ENCODE measurements at regions of chr14 and their contacts with region 1.

Region 1: DNA sequence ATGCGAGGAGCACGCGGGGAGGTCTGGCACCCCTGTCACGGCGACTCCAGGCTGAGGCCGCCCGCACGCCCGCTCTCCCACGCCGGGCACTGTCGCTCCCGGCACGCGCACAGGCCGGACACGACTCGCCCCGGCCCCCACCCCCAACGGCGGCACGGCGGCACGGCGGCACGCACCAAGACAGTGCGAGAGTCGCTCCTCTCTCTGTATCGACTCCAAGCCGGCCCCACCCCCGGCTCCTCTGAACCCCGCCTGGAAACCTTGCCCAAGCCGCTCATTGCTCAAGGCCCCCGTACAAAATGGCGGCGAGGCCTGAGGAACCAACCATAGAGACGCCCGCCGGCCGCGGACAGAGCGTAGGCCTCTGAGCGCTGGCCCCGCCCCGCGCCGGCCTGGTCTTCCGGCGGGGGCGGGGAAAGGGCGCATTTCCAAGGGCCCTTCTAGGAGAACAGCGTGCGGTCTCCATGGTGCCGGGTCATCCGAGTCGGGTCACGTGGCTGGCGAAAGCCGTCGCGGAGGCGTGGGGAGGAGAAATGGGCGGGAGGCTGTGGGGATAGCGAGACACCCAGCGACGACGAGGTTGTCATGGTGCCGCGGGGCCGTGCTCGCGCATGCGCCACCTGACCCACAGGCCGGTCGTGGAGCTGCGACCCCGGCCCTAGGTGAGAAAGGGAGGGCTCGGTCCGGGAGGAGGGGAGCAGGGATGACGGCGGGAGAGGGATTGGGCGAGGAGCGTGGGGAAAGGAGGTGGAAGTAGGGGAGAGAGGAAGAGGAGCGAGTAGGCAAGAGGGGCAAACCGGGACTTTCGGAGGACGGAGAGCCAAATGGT is at the start of gene CIPC:
- DNase-seq: peak; percentile 100
- ATAC-seq: peak; percentile 91
- H3K4me3 Mint-ChIP-seq: peak within 1 kb of the TSS; percentile 87
- H3K27ac Mint-ChIP-seq: peak within 1 kb of the TSS; percentile 99
- H3K4me1 Mint-ChIP-seq: peaks cover 40% of the 10 kb centered on the region
- H3K27me3 Mint-ChIP-seq: no peaks in the 10 kb centered on the region
- total RNA-seq, gene CIPC: 8.6 to 10.0 TPM

Region 2: GRCh38 chr14:76710056-76711010 is 387.6 kb before region 1 on chr14:
- CTCF ChIA-PET with region 1: interaction called, 11 read pairs
- POLR2A ChIA-PET with region 1: no interaction called
- intact Hi-C with region 1: loop called in 1 of 2 experiments (anchors 1 kb)
- DNase-seq: peak; percentile 51
- ATAC-seq: peak; percentile 49
- H3K4me3 Mint-ChIP-seq: no peak overlapping the region
- H3K27ac Mint-ChIP-seq: no peak overlapping the region
- H3K4me1 Mint-ChIP-seq: no peaks in the 10 kb centered on the region
- H3K27me3 Mint-ChIP-seq: peaks cover 7% of the 10 kb centered on the region

Region 3: DNA sequence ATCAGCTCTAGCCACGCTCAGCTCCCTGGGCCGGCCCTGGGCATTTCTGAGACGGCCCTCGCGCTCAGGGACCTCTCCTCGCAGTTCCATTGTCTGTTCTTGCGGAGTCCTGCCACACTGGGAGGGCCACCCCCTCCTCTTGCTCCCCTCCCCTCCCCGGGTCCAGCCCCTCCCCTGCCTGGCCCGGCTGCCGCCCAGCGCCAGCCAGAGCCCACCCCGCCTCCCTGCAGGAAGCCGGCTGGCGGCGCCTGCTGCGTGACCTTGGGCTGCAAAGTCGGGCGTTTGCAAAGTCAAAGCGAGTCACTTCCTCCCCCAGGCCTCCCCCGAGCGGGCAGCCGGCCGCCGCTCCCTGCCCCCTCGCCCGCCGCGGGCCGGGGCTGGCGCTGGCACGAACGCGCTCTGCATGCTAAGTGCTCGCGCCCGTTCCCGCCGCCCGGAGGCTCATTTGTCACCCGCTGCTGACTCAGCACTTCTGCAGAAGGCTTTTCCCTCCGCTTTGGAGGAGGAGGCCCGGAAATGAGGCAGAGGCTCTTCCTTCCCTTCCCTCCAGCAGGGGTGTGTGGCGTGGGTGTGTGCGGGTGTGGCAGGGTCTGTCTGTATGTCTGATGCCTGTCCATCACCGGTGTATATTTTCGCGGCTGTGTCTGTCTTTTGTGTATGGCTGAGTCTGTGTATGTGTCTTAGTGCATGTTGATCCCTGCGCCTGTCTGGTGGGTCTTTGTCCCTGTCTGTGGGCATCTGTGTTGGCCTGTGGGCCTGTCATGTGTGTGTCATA is 141.4 kb before region 1 on chr14:
- CTCF ChIA-PET with region 1: no interaction called
- POLR2A ChIA-PET with region 1: interaction called, 4 read pairs
- intact Hi-C with region 1: loop called in 1 of 2 experiments (anchors 1 kb)
- DNase-seq: peak; percentile 96
- ATAC-seq: peak; percentile 62
- H3K4me3 Mint-ChIP-seq: peak overlapping the region; percentile 71
- H3K27ac Mint-ChIP-seq: peak overlapping the region; percentile 91
- H3K4me1 Mint-ChIP-seq: peaks cover 81% of the 10 kb centered on the region
- H3K27me3 Mint-ChIP-seq: no peaks in the 10 kb centered on the region

Region 4: DNA sequence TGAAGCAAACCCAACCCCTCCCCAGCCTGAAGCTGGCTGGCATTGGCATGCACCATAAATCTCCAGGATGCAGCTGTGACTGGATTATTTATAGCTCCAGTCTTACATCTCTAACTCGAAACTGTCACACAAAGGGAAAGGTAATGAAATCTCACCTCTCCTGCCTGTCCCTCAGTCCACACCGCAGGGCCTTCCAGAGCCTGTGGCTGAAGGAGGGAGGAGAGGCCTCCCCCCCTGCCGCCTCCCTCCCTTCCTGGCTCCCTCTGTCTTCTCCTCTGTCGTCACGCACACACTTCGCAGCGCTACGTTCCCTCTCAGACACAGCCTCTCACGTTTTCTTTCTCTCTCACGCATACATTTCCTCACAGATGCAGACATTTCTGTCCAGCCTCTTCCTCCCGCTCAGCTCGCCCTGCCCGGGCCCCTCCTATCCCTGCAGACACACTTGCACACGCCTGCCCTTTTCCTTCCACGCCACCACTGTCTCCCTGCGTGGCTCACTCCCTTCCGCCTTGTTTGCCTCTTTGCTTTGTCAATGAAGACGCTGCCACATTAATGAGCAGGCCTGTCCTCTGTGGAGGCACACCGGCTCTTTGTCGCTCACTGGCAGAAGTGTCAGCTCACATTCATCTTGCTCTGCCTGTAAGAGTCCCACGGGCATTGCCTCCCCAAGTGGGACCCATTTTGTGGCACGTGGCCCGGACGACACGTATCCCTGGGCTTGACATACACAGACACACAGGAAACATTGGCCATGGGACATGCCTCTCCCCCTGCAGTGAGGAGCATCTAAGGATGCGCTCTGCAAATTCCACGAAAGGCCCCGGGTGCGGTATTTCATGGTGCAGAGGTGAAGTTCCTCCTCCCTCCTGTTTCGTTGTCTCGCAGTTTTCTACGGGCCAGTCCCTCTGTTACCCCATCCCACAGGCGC is 97.3 kb before region 1 on chr14:
- CTCF ChIA-PET with region 1: no interaction called
- POLR2A ChIA-PET with region 1: no interaction called
- intact Hi-C with region 1: no loop called
- DNase-seq: peak; percentile 47
- ATAC-seq: peak; percentile 75
- H3K4me3 Mint-ChIP-seq: peak overlapping the region; percentile 34
- H3K27ac Mint-ChIP-seq: peak overlapping the region; percentile 82
- H3K4me1 Mint-ChIP-seq: peaks cover 23% of the 10 kb centered on the region
- H3K27me3 Mint-ChIP-seq: no peaks in the 10 kb centered on the region

Region 5: DNA sequence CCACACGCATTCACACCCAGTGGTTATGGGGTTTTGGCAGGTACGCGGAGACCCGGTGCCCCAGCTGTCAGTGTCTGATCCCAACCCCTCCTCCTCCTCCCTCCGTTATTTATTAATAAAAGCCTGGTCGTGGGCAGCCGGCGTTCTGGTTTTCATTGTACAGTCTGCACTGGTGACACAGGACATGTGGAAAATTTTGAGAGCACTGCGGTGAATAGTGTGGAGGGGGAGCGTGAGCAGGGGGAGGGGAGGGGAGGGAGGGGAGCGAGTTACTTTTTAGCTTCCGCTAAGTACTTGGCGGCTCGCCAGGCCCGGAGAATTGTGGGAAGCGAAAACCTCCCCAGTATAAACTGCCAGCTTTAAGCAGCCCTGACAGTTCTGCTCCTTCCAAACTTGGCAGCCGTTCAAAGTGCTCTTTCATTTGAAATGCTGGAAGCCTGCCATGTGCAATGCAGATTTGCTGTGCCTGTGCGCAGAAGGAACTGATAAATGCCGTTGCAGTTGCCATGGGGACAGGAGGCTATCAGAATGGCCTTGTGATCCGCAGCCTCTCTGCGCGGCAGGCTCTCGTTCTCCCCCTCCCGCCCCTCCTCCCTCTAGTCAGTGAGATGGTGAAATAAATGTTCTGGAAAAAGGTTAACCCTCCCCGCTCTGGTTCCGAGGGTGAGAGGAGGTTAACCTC is 57.7 kb before region 1 on chr14:
- CTCF ChIA-PET with region 1: no interaction called
- POLR2A ChIA-PET with region 1: no interaction called
- intact Hi-C with region 1: loop called in 1 of 2 experiments (anchors 5 kb)
- DNase-seq: peak; percentile 98
- ATAC-seq: peak; percentile 66
- H3K4me3 Mint-ChIP-seq: peak overlapping the region; percentile 63
- H3K27ac Mint-ChIP-seq: peak overlapping the region; percentile 93
- H3K4me1 Mint-ChIP-seq: peaks cover 89% of the 10 kb centered on the region
- H3K27me3 Mint-ChIP-seq: no peaks in the 10 kb centered on the region

Region 6: DNA sequence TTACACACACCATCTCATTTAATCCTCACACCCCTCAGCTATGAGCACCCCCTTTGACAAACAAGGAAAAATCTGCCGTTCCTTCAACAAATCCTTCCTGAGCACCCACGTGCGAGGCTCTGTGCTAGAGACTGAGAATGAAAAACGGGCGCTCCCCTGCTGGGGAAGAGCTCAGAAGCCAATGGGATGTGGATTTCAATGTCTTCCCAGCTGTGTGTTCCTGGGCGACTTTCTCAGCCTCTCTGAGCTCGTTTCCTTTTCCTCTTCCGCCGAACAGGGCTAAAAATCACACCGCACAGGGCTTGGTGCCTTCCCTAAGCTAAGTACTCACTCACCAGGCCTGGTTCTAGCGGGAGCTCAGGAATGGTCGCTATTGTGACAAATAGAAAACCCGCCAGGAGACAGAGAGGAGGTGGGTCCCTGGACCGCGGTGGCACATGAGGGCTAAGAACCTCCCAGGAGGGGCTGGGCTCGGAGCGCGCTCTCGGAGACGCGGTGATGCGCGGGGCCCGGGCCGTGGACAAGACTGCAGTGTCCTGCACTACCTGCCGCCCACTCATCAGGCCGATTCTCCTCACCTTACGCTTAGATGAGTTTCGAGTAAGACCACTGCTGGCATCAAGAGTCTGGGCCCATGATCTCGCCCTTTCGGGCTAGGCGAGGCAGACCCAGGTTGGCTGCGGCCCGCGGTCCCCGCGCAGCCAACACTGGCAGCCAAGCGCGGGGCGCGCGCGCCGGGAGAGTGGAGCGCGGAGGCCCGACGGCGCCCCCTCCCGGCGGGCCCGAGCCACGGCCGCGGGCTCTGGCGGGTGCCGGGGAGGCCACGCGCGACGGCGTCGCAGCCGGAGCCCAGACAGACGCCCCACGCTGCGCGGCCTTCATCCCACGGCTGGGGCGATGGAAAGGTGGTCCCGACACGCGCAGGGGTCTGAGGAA is 26.7 kb after region 1 on chr14:
- CTCF ChIA-PET with region 1: interaction called, 31 read pairs
- POLR2A ChIA-PET with region 1: interaction called, 6 read pairs
- intact Hi-C with region 1: loop called (anchors 1 to 2 kb)
- DNase-seq: peak; percentile 77
- ATAC-seq: peak; percentile 77
- H3K4me3 Mint-ChIP-seq: peak overlapping the region; percentile 68
- H3K27ac Mint-ChIP-seq: peak overlapping the region; percentile 55
- H3K4me1 Mint-ChIP-seq: peaks cover 37% of the 10 kb centered on the region
- H3K27me3 Mint-ChIP-seq: peaks cover 9% of the 10 kb centered on the region

Region 7: DNA sequence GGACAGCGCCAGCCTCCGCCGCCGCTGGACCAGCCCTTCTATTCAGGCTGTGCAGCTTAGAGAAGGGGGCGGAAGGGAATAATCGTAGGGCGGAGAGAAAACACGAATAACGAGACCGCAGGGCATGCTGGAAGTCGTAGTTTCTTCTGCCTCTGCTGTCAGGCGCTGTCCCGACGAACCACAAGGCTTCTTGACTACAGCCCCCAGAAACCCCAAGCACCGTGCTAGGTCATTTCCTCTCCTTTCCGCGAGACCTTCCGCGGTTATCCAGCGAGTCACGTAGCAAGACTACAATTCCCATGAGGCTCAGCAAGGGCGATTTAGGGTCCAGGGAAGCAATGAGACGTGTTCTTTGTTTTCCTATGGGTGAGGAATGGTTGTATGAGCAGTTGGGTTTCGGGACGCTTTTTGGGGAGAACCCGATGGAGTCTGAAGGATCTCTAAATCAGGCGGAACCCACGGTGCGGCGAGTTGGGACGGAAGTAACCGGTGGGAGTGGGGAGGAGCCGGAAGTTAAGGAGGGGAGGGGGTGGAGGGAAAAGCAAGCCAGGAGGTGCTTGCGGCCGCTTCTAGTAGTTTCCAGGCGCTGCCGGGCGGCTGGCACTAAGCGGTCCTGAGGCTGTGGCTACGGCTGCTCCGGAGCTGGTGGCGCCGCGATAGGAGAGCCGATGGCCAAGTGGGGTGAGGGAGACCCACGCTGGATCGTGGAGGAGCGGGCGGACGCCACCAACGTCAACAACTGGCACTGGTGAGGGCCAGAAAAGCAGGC is 359.8 kb after region 1 on chr14 and contains the starts of genes AHSA1 and VIPAS39:
- CTCF ChIA-PET with region 1: no interaction called
- POLR2A ChIA-PET with region 1: no interaction called
- intact Hi-C with region 1: loop called (anchors 1 to 5 kb)
- DNase-seq: peak; percentile 96
- ATAC-seq: peak; percentile 96
- H3K4me3 Mint-ChIP-seq: peak within 1 kb of the TSS; percentile 88
- H3K27ac Mint-ChIP-seq: peak within 1 kb of the TSS; percentile 100
- H3K4me1 Mint-ChIP-seq: peaks cover 38% of the 10 kb centered on the region
- H3K27me3 Mint-ChIP-seq: no peaks in the 10 kb centered on the region
- total RNA-seq, gene AHSA1: 318 to 348 TPM
- total RNA-seq, gene VIPAS39: 16.4 to 20.1 TPM